ENCODE measurements at regions of chr15 and their contacts with region 1.

Region 1: DNA sequence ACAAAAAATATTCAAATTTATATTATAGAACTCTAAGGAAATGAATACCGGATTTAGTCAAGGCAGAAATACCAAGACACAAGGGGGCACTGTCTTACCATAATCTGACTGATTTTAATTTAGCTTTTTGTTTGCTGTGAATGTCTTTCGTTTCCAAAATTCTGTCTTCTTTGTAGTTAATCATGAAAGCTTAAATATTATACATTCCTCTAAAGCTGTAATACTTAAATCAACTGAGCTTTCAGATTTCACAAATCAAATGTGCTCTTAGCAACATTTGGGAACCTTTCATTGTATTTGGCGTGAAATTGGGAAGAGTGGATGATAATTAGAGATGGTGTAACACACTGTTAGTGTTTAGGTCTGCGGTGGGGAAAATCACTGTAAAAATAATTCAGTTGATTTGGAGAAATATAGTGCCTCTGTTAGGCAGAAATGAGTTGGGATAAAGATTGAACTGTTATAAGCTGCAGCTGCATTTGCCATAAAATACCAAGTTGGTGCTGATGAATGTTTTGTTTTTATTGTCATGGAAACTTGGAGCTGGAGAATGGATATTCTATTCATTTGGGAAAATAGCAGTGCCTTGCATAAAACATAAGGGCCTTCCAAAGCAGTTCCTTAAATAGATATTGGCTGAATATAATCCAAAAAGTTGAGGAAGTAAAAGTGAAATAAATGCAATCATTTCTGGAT is 228.2 kb downstream of the TCF12 start:
- DNase-seq: peak in 2 of 9 experiments; percentile 36 to 51
- ATAC-seq: no peak
- H3K4me3 ChIP-seq: no peak overlapping the region
- H3K4me3 Mint-ChIP-seq: no peak overlapping the region
- H3K27ac ChIP-seq: no peak overlapping the region
- H3K27ac Mint-ChIP-seq: no peak overlapping the region
- H3K4me1 ChIP-seq: no peaks in the 10 kb centered on the region
- H3K4me1 Mint-ChIP-seq: peaks cover 4% of the 10 kb centered on the region
- H3K27me3 ChIP-seq: no peaks in the 10 kb centered on the region
- H3K27me3 Mint-ChIP-seq: no peaks in the 10 kb centered on the region
- CTCF ChIP-seq: peak; percentile 65

Region 2: DNA sequence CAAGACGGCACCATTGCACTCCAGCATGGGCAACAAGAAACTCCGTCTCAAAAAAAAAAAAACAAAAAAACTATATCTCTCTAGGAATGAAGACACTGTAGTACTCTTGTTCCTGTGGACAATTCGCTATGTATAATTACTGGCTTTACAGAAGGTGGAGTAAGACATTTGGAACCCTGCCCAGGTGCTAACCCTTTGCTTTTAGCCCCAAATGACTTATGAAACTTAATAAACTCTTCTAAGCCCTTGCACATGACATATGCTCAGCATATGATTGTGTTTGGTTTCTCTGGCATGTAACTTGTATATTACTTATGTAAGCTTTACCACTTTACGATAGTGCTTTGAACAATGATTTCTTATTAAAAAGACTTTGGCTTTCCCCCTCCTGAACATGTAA is 1376.4 kb before region 1 on chr15:
- CTCF ChIA-PET with region 1: no interaction called
- POLR2A ChIA-PET with region 1: no interaction called
- intact Hi-C with region 1: no loop called
- DNase-seq: no peak
- ATAC-seq: no peak
- H3K4me3 ChIP-seq: no peak overlapping the region
- H3K4me3 Mint-ChIP-seq: no peak overlapping the region
- H3K27ac ChIP-seq: no peak overlapping the region
- H3K27ac Mint-ChIP-seq: no peak overlapping the region
- H3K4me1 ChIP-seq: no peaks in the 10 kb centered on the region
- H3K4me1 Mint-ChIP-seq: peaks cover 4% of the 10 kb centered on the region
- H3K27me3 ChIP-seq: no peaks in the 10 kb centered on the region
- H3K27me3 Mint-ChIP-seq: peaks cover 9% of the 10 kb centered on the region
- CTCF ChIP-seq: no peak

Region 3: DNA sequence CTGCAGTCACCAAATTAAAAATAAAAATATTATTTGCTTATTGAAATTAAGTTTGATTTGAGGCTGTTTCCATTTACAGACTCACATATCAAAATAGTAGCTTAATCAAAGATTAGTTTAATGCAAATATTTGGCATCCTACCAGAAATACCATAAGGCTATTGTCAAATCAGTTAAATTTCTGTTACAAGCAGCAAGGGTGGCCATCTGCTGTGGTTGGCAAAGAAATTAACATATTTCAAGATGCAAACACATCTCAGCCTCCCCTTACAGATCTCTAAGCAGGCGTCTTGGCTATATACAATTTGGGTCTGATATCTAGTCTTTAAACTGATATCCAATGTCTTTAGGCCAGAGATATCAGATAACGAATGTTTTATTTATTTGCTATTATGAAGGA is 1070.0 kb before region 1 on chr15:
- CTCF ChIA-PET with region 1: no interaction called
- POLR2A ChIA-PET with region 1: no interaction called
- intact Hi-C with region 1: no loop called
- DNase-seq: no peak
- ATAC-seq: no peak
- H3K4me3 ChIP-seq: no peak overlapping the region
- H3K4me3 Mint-ChIP-seq: no peak overlapping the region
- H3K27ac ChIP-seq: no peak overlapping the region
- H3K27ac Mint-ChIP-seq: no peak overlapping the region
- H3K4me1 ChIP-seq: no peaks in the 10 kb centered on the region
- H3K4me1 Mint-ChIP-seq: no peaks in the 10 kb centered on the region
- H3K27me3 ChIP-seq: no peaks in the 10 kb centered on the region
- H3K27me3 Mint-ChIP-seq: no peaks in the 10 kb centered on the region
- CTCF ChIP-seq: no peak

Region 4: DNA sequence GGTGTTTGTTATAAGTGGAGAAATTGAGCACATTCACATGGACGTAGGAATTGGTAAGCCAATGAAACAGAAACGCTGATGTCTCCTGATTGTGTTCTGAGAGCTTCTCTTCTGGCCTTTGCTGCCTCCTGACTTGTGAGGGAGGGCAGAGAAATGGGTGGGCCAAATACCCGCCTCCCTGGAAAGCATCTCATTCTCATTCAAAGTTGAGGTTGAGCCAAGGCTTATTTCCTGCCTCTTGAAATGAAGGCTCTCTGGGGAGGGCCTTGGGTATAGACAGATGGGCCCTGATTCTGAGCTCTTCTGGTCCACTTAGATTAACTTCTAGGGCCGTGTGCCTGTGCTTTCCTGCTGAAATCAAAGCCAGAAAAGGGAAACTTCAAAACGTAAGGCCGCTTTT is 387.6 kb after region 1 on chr15:
- CTCF ChIA-PET with region 1: no interaction called
- POLR2A ChIA-PET with region 1: no interaction called
- intact Hi-C with region 1: loop called in 1 of 2 experiments (anchors 5 kb)
- DNase-seq: no peak
- ATAC-seq: no peak
- H3K4me3 ChIP-seq: no peak overlapping the region
- H3K4me3 Mint-ChIP-seq: no peak overlapping the region
- H3K27ac ChIP-seq: no peak overlapping the region
- H3K27ac Mint-ChIP-seq: no peak overlapping the region
- H3K4me1 ChIP-seq: no peaks in the 10 kb centered on the region
- H3K4me1 Mint-ChIP-seq: no peaks in the 10 kb centered on the region
- H3K27me3 ChIP-seq: no peaks in the 10 kb centered on the region
- H3K27me3 Mint-ChIP-seq: no peaks in the 10 kb centered on the region
- CTCF ChIP-seq: no peak

Region 5: DNA sequence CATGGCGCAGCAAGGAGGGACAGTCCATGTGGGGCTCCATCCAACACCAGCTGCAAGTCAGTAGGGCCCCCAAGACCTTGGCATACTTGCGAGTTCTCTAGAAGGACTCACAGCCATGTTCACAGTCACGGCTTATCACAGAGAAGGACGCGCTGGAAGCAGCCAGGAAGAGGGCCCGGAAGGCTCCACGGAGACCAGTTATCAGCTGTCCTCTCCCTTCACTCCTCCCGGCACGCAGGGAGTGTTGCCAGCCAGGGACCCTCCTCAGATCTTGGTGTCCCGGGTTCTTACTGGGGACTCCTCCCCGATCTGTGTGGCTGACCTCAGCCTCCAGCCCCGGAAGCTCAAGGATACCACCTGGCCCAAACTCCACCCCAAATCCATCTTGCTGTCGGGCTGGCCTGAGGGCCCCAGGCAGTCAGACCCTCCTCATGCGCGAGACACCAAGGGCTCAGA is 1718.8 kb after region 1 on chr15:
- CTCF ChIA-PET with region 1: no interaction called
- POLR2A ChIA-PET with region 1: no interaction called
- intact Hi-C with region 1: no loop called
- DNase-seq: no peak
- ATAC-seq: no peak
- H3K4me3 ChIP-seq: no peak overlapping the region
- H3K4me3 Mint-ChIP-seq: no peak overlapping the region
- H3K27ac ChIP-seq: no peak overlapping the region
- H3K27ac Mint-ChIP-seq: no peak overlapping the region
- H3K4me1 ChIP-seq: peaks cover 6% of the 10 kb centered on the region
- H3K4me1 Mint-ChIP-seq: peaks cover 16% of the 10 kb centered on the region
- H3K27me3 ChIP-seq: no peaks in the 10 kb centered on the region
- H3K27me3 Mint-ChIP-seq: peaks cover 6% of the 10 kb centered on the region
- CTCF ChIP-seq: no peak